Stomach (tissue), 19 donors: ENCODE measurements at regions of chr4 and their contacts with region 1.

Region 1: DNA sequence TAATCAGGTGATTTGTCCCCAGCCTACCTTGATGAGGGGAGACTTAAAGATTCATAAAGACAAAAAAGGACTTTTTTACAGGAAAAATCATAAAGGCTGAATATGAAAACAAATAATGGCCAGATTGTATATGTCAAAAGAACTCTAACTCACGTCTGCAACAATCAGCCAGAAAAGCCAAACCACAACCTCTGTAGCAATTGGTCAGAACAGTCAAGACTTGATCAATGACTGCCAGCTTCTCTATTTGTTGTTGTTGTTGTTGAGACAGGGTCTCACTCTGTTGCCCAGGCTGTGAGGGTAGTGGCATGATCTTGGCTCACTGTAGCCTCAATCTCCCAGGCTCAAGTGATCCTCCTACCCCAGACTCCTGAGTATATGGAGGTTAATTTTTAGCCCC is 35.9 kb upstream of the PPA2 start:
- DNase-seq: no peak
- H3K4me3 ChIP-seq: no peak overlapping the region
- H3K27ac ChIP-seq: no peak overlapping the region
- H3K4me1 ChIP-seq: no peaks in the 10 kb centered on the region
- H3K27me3 ChIP-seq: no peaks in the 10 kb centered on the region
- CTCF ChIP-seq: no peak
- EP300 ChIP-seq: no peak
- POLR2A ChIP-seq: no peak

Region 2: GRCh38 chr4:105191621-105192210 is 318.0 kb before region 1 on chr4:
- intact Hi-C with region 1: no loop called
- DNase-seq: peak in 1 of 2 donors; percentile 20
- H3K4me3 ChIP-seq: no peak overlapping the region
- H3K27ac ChIP-seq: peak overlapping the region in 1 of 5 donors; percentile 36
- H3K4me1 ChIP-seq: peaks cover 0 to 54% (median 30%) of the 10 kb centered on the region in 4 donors
- H3K27me3 ChIP-seq: no peaks in the 10 kb centered on the region
- CTCF ChIP-seq: no peak
- EP300 ChIP-seq: no peak
- POLR2A ChIP-seq: no peak

Region 3: DNA sequence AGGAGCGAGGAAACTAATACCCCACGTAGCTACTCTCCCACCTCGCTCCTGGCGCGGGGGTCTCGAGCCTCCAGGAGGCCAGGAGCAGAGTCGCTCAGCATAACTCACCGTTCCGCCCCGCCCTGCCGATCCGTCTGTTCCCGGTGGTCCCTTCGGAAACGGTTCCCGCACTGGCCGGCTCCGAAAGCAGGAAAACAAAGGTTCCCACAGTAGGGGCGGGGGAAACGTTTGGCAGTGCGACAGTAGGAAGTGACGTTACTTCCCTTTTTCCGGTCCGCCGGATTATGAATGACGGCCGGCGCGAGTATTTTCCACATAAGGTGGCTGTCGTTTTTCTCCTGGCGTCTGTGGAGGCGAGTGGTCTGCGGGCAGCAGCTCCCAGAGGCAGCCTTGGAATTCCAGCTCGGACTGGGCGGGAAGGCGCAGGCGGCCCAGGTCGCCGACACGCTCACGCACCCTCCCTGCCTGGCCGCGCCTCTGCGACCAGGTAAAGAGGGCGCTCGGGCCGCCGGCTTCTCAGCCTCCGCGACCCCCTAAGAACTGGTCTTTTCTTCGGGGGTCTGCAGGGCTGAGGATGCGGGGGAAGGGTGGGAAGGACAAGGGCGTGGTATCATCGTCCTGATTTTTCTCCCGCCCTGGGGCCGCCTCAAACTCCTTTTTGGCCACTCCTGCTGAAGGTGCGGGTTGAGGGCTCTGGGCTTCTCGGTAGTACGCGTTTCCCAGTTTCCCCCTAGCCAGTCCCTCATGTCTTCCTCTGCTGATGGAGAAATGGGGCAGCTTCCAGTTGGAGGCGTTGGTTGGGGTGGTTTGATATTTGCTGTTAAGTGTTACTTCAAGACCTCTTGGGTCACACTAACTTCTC is 199.0 kb after region 1 on chr4 and contains the starts of genes GSTCD and INTS12:
- intact Hi-C with region 1: loop called (anchors 10 kb)
- DNase-seq: peak; percentile 95 to 97
- H3K4me3 ChIP-seq: peak within 1 kb of the TSS; percentile 74 to 90 (median 80)
- H3K27ac ChIP-seq: peak within 1 kb of the TSS; percentile 87 to 93 (median 91)
- H3K4me1 ChIP-seq: peaks cover 17 to 59% (median 38%) of the 10 kb centered on the region in 4 donors
- H3K27me3 ChIP-seq: no peaks in the 10 kb centered on the region
- CTCF ChIP-seq: no peak
- EP300 ChIP-seq: no peak
- POLR2A ChIP-seq: peak in 1 of 4 donors; percentile 23
- total RNA-seq, gene GSTCD: 4.8 to 129 (median 11.1) TPM
- total RNA-seq, gene INTS12: 8.7 to 35.7 (median 17.5) TPM